Heart right ventricle (tissue), 16 donors: ENCODE measurements at regions of chr1 and their contacts with region 1.

Region 1: DNA sequence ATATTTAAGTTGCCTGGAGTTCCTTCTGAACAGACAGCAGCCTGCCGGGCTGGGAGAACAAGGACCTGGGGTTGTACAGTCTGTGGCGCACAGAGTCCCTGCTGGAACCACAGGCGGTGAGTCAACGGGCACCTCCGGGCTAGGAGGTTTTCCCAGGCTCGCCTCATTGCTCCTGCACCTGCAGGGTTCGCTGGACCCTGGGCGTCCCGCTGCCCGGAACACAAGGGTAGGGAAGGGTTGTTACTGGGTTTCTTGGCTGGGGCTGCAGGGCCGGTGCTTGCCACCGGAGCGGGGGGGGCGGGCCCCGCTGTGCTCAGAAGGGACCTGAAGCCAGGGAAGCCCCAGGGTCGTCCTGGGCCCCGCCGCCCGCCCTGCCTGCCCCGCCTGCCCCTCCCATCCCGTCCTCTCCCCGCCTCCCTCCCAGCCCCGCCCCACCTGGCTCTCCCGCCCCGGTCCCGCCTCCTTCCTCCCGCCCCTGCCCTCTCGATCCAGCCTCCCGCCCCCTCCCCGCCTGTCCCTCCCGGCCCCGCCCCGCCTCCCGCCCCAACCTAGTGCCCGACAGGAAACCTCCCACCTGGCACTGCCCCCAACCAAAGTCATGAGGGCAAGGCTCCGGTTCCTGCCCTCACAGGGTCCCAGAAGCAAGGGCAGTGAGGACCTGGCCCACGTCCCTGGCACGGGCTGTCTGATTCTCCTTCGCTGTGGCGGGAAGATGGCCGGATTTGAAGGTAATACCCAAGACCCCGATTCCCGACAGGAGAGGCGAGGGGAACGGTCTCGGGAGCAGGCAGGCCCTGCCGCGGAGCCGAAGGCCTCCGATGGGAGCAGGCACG is 6.8 kb downstream of the JMJD4 start:
- DNase-seq: peak; percentile 83 to 84
- ATAC-seq: peak; percentile 60 to 71 (median 66)
- H3K4me3 ChIP-seq: peak overlapping the region; percentile 36 to 79 (median 62)
- H3K27ac ChIP-seq: peak overlapping the region; percentile 56 to 87 (median 78)
- H3K4me1 ChIP-seq: peaks cover 10 to 41% (median 26%) of the 10 kb centered on the region in 9 donors
- H3K27me3 ChIP-seq: peaks cover 0 to 9% (median 0%) of the 10 kb centered on the region in 7 donors
- CTCF ChIP-seq: peak in 1 of 9 donors; percentile 9

Region 2: GRCh38 chr1:227542143-227543120 is 185.8 kb before region 1 on chr1:
- intact Hi-C with region 1: no loop called
- DNase-seq: peak; percentile 84 to 91
- ATAC-seq: peak; percentile 95 to 97 (median 97)
- H3K4me3 ChIP-seq: peak overlapping the region; percentile 45 to 88 (median 76)
- H3K27ac ChIP-seq: peak overlapping the region; percentile 2 to 78 (median 68)
- H3K4me1 ChIP-seq: peaks cover 0 to 17% (median 12%) of the 10 kb centered on the region in 9 donors
- H3K27me3 ChIP-seq: peaks cover 0 to 7% (median 0%) of the 10 kb centered on the region in 7 donors
- CTCF ChIP-seq: peak; percentile 95 to 99 (median 99)

Region 3: GRCh38 chr1:227762233-227762911 is 34.1 kb after region 1 on chr1:
- intact Hi-C with region 1: loop called in 1 of 10 experiments (anchors 2 kb)
- DNase-seq: peak; percentile 90
- ATAC-seq: peak; percentile 81 to 89 (median 84)
- H3K4me3 ChIP-seq: peak overlapping the region in 4 of 10 donors; percentile 6 to 34 (median 24)
- H3K27ac ChIP-seq: peak overlapping the region in 8 of 10 donors; percentile 5 to 91 (median 63)
- H3K4me1 ChIP-seq: peaks cover 11 to 69% (median 54%) of the 10 kb centered on the region in 9 donors
- H3K27me3 ChIP-seq: no peaks in the 10 kb centered on the region
- CTCF ChIP-seq: peak; percentile 80 to 97 (median 92)